Naive thymus-derived CD4-positive, alpha-beta T cell (primary cell): ENCODE measurements at regions of chr5 and their contacts with region 1.

Region 1: DNA sequence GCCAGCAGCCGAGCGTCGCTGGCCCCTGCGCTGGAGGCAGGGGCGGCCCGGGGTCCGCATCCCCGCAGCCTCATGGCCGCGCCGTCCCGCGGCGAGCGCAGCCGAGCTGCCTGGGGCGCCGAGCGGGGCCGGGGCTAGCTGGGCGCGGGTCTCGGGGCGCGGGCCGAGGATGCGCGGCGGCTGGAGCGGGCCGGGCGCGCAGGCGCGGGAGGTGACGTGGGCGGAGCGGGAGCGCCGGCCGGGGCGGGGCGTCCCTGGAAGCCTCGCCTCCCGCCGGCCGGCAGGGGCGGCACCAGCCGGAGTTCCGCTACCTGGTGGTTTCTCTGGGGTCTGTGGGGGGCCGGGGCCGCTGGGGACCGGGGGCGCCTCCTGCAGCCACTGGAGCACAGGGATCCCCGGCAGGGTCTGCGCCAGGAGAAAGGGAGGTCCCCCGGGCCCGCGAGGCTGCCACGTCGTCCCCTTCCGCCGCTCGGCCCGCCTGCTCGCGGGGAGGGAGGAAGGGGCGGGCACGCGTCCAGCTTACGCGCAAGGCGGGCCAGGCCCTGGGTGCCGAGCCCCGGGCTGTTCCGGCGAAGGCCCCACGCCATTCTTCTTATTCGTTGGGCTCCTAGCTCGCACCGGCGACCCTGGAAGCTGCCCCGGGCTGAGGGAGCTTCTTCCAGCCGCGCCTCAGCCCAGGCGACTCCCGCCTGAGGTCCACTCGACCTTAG is at the start of gene LPCAT1:
- DNase-seq: peak; percentile 44 to 91 (median 71)
- ATAC-seq: peak; percentile 93
- H3K4me3 ChIP-seq: peak within 1 kb of the TSS; percentile 61
- H3K4me3 Mint-ChIP-seq: peak within 1 kb of the TSS; percentile 73 to 89 (median 83)
- H3K27ac ChIP-seq: peak within 1 kb of the TSS; percentile 81
- H3K27ac Mint-ChIP-seq: peak within 1 kb of the TSS in 6 of 9 donors; percentile 33 to 77 (median 69)
- H3K4me1 ChIP-seq: peaks cover 13 to 31% of the 10 kb centered on the region in 2 donors
- H3K4me1 Mint-ChIP-seq: peaks cover 13 to 30% (median 19%) of the 10 kb centered on the region in 7 donors
- H3K27me3 ChIP-seq: no peaks in the 10 kb centered on the region
- H3K27me3 Mint-ChIP-seq: peaks cover 0 to 8% (median 0%) of the 10 kb centered on the region in 5 donors
- total RNA-seq, gene LPCAT1: 29.4 to 89.4 (median 49.7) TPM

Region 2: GRCh38 chr5:1431021-1431811 is 92.7 kb before region 1 on chr5:
- CTCF ChIA-PET with region 1: no interaction called
- POLR2A ChIA-PET with region 1: no interaction called
- intact Hi-C with region 1: no loop called
- DNase-seq: peak in 1 of 9 donors; percentile 3
- ATAC-seq: no peak
- H3K4me3 ChIP-seq: no peak overlapping the region
- H3K4me3 Mint-ChIP-seq: no peak overlapping the region
- H3K27ac ChIP-seq: no peak overlapping the region
- H3K27ac Mint-ChIP-seq: no peak overlapping the region
- H3K4me1 ChIP-seq: no peaks in the 10 kb centered on the region
- H3K4me1 Mint-ChIP-seq: no peaks in the 10 kb centered on the region
- H3K27me3 ChIP-seq: no peaks in the 10 kb centered on the region
- H3K27me3 Mint-ChIP-seq: peaks cover 0 to 10% (median 8%) of the 10 kb centered on the region in 5 donors

Region 3: DNA sequence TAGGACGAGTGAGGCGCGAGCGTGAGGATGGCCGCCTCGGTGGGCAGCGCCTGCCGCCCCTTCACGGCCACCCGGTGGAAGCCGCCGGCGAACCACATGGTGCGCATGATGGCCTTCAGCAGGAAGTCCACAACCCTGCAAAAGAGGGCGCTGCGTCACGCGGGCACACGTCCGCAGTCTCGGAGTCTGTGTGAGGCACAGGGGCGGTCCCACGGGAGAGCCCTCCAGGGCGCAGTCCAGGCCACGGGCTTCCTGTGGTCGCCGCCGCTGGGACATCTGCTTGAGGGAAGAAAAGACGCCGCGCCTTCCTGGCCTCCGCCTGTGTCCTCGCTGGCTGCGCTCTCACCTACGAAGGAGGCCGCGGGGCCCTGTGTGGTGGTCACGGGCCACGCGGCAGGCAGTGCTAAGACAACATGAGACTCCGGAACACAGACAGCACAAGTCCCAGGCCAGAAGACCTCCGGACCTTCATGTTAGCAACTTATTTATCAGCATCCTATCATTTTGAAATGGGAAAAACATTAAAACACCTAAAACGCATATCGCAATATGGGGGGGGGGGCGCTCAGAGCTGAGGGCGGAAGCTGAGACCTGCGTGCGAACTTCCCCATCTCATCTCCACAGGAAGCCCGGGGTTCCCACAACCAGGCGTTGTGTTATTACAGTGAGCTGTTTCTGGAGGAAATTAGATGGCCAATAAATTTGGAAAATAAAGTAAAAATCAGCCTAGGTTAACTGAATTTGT is 29.0 kb before region 1 on chr5:
- CTCF ChIA-PET with region 1: no interaction called
- POLR2A ChIA-PET with region 1: interaction called, 3 read pairs
- intact Hi-C with region 1: loop called in 1 of 2 experiments (anchors 2 kb)
- DNase-seq: peak in 2 of 9 donors; percentile 28 to 29
- ATAC-seq: peak; percentile 81
- H3K4me3 ChIP-seq: no peak overlapping the region
- H3K4me3 Mint-ChIP-seq: peak overlapping the region in 8 of 10 donors; percentile 8 to 70 (median 58)
- H3K27ac ChIP-seq: no peak overlapping the region
- H3K27ac Mint-ChIP-seq: peak overlapping the region in 6 of 9 donors; percentile 52 to 82 (median 72)
- H3K4me1 ChIP-seq: peaks cover 0 to 22% of the 10 kb centered on the region in 2 donors
- H3K4me1 Mint-ChIP-seq: peaks cover 8 to 43% (median 22%) of the 10 kb centered on the region in 7 donors
- H3K27me3 ChIP-seq: no peaks in the 10 kb centered on the region
- H3K27me3 Mint-ChIP-seq: no peaks in the 10 kb centered on the region

Region 4: GRCh38 chr5:1536322-1536845 is 12.5 kb after region 1 on chr5:
- CTCF ChIA-PET with region 1: interaction called, 3 read pairs
- POLR2A ChIA-PET with region 1: interaction called, 21 read pairs
- intact Hi-C with region 1: loop called in 1 of 2 experiments (anchors 1 kb)
- DNase-seq: peak; percentile 25 to 72 (median 61)
- ATAC-seq: peak; percentile 97
- H3K4me3 ChIP-seq: peak overlapping the region; percentile 59
- H3K4me3 Mint-ChIP-seq: peak overlapping the region; percentile 71 to 90 (median 82)
- H3K27ac ChIP-seq: peak overlapping the region; percentile 75
- H3K27ac Mint-ChIP-seq: peak overlapping the region; percentile 81 to 94 (median 91)
- H3K4me1 ChIP-seq: peaks cover 11 to 22% of the 10 kb centered on the region in 2 donors
- H3K4me1 Mint-ChIP-seq: peaks cover 19 to 37% (median 30%) of the 10 kb centered on the region in 7 donors
- H3K27me3 ChIP-seq: no peaks in the 10 kb centered on the region
- H3K27me3 Mint-ChIP-seq: peaks cover 0 to 39% (median 0%) of the 10 kb centered on the region in 5 donors

Region 5: GRCh38 chr5:1594357-1595106 is 70.6 kb after region 1 on chr5:
- CTCF ChIA-PET with region 1: no interaction called
- POLR2A ChIA-PET with region 1: no interaction called
- intact Hi-C with region 1: loop called in 1 of 2 experiments (anchors 1 kb)
- DNase-seq: peak; percentile 10 to 75 (median 64)
- ATAC-seq: peak; percentile 91
- H3K4me3 ChIP-seq: peak overlapping the region; percentile 71
- H3K4me3 Mint-ChIP-seq: peak overlapping the region; percentile 53 to 86 (median 78)
- H3K27ac ChIP-seq: peak overlapping the region; percentile 58
- H3K27ac Mint-ChIP-seq: peak overlapping the region in 3 of 9 donors; percentile 54 to 81 (median 77)
- H3K4me1 ChIP-seq: no peaks in the 10 kb centered on the region
- H3K4me1 Mint-ChIP-seq: peaks cover 0 to 16% (median 8%) of the 10 kb centered on the region in 7 donors
- H3K27me3 ChIP-seq: no peaks in the 10 kb centered on the region
- H3K27me3 Mint-ChIP-seq: peaks cover 0 to 3% (median 0%) of the 10 kb centered on the region in 5 donors